SK-N-SH (cell line): ENCODE measurements at regions of chr9 and their contacts with region 1.

Region 1: GRCh38 chr9:98034593-98035546 is 21.7 kb upstream of the NANS start:
- DNase-seq: peak; percentile 79
- H3K4me3 ChIP-seq: no peak overlapping the region
- H3K27ac ChIP-seq: peak overlapping the region in 1 of 2 experiments; percentile 18; a peak in 1 of 4 replicates
- H3K4me1 ChIP-seq: peaks cover 0 to 3% of the 10 kb centered on the region in 2 experiments; a peak in 1 of 4 replicates
- H3K27me3 ChIP-seq: no peaks in the 10 kb centered on the region
- CTCF ChIP-seq: peak; percentile 83
- EP300 ChIP-seq: no peak
- RAD21 ChIP-seq: peak; percentile 64

Region 2: DNA sequence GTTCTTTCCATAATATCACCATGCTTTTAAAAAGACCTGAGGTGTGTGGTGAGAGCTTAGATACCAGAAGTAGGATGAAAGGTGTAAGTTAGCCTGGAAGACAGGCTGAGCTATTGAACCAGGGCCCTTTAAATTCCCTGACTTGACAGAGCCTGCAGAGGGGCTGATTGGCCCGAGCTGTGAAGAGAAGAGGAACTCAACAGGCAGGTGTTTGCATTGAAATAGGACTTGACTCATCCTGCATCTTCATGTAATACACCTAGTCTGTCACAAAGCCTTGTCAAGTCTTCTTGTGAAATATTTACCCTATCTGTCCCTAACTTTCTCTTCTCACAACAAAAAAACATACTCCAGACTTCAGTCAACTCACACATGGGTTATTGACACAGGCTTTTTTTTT is 68.4 kb before region 1 on chr9:
- CTCF ChIA-PET with region 1: no interaction called
- POLR2A ChIA-PET with region 1: no interaction called
- DNase-seq: no peak
- H3K4me3 ChIP-seq: no peak overlapping the region
- H3K27ac ChIP-seq: no peak overlapping the region
- H3K4me1 ChIP-seq: no peaks in the 10 kb centered on the region
- H3K27me3 ChIP-seq: peaks cover 20% of the 10 kb centered on the region; the same call in 1 of the 2 replicates
- CTCF ChIP-seq: no peak
- EP300 ChIP-seq: no peak
- RAD21 ChIP-seq: no peak

Region 3: GRCh38 chr9:97982683-97983588 is 51.9 kb before region 1 on chr9 and contains the start of gene ANP32B:
- CTCF ChIA-PET with region 1: interaction called, 18 read pairs
- POLR2A ChIA-PET with region 1: no interaction called
- DNase-seq: peak; percentile 92
- H3K4me3 ChIP-seq: peak within 1 kb of the TSS; percentile 91 to 98
- H3K27ac ChIP-seq: peak within 1 kb of the TSS; percentile 89 to 96
- H3K4me1 ChIP-seq: peaks cover 4 to 32% of the 10 kb centered on the region in 2 experiments; a peak in 2 of 4 replicates
- H3K27me3 ChIP-seq: no peaks in the 10 kb centered on the region
- CTCF ChIP-seq: peak; percentile 65
- EP300 ChIP-seq: no peak
- RAD21 ChIP-seq: peak; percentile 31
- polyA plus RNA-seq, gene ANP32B: 21.6 and 28.4 TPM in 2 replicates

Region 4: DNA sequence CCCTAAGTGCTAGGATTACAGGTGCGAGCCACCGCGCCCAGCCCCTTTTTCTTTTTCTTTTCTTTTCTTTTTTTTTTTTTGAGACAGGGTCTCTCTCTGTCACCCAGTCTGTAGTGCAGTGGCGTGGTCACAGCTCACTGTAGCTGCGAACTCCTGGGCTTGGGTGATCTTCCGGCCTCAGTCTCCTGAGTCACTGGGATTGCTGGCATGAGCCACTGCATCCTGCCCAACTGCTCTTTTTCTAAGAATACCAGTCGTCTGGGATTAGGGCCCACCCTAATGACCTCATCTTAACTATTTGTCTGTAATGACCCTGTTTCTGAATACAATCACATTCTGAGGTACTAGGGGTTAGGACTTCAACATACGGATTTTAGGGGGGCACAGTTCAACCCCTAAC is 12.4 kb before region 1 on chr9:
- CTCF ChIA-PET with region 1: interaction called, 44 read pairs
- POLR2A ChIA-PET with region 1: no interaction called
- DNase-seq: no peak
- H3K4me3 ChIP-seq: no peak overlapping the region
- H3K27ac ChIP-seq: 0 out of 4 replicates have a peak overlapping the region, but pooled peaks of 1 of the 2 experiments have one; percentile 20
- H3K4me1 ChIP-seq: peaks cover 0 to 16% of the 10 kb centered on the region in 2 experiments; a peak in 2 of 4 replicates
- H3K27me3 ChIP-seq: no peaks in the 10 kb centered on the region
- CTCF ChIP-seq: no peak
- EP300 ChIP-seq: no peak
- RAD21 ChIP-seq: no peak

Region 5: DNA sequence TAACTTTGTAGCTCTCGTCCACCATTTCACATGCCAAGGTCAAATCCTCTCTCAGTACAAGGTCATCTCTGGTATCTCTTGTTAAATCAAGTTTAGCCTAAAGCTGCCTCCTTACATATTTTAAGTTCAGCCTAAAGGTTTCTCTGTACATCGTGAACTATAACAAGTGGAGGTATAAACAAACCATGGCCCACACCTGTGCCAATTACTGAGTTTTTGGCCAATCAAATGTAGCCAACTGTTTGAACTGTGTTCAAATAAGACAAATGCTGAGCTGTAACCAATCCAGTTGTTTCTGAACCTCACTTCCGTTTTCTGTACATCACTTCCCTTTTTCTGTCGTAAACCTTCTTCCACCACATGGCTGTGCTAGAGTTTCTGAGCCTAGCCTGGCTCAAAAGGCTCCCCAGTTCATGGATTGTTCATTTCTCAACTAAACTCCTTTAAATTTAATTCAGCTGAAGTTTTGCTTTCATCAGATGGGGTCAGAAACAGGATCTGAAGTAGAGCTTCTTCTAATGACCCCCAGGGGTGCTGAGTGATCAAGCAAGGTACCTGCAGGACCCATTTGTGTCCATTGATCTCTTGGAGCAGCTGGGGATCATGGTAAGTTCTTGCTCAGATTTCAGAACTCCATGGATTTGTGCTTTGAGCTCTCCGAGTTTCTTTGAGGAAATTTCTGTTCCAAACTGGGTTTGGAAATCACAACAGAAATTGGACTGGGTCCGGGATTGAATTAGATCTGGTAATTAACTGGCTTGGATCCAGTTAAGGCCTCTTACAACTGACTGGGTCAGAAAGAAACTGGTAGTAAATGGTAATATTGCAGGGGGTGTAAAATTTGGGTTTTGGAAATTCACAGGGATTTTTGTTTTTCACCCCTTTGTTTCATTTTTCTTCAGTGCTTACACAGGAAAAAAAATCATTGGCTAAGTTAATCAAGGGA is 10.6 kb after region 1 on chr9:
- CTCF ChIA-PET with region 1: interaction called, 14 read pairs
- POLR2A ChIA-PET with region 1: no interaction called
- DNase-seq: no peak
- H3K4me3 ChIP-seq: no peak overlapping the region
- H3K27ac ChIP-seq: no peak overlapping the region
- H3K4me1 ChIP-seq: no peaks in the 10 kb centered on the region
- H3K27me3 ChIP-seq: no peaks in the 10 kb centered on the region
- CTCF ChIP-seq: no peak
- EP300 ChIP-seq: no peak
- RAD21 ChIP-seq: no peak

Region 6: DNA sequence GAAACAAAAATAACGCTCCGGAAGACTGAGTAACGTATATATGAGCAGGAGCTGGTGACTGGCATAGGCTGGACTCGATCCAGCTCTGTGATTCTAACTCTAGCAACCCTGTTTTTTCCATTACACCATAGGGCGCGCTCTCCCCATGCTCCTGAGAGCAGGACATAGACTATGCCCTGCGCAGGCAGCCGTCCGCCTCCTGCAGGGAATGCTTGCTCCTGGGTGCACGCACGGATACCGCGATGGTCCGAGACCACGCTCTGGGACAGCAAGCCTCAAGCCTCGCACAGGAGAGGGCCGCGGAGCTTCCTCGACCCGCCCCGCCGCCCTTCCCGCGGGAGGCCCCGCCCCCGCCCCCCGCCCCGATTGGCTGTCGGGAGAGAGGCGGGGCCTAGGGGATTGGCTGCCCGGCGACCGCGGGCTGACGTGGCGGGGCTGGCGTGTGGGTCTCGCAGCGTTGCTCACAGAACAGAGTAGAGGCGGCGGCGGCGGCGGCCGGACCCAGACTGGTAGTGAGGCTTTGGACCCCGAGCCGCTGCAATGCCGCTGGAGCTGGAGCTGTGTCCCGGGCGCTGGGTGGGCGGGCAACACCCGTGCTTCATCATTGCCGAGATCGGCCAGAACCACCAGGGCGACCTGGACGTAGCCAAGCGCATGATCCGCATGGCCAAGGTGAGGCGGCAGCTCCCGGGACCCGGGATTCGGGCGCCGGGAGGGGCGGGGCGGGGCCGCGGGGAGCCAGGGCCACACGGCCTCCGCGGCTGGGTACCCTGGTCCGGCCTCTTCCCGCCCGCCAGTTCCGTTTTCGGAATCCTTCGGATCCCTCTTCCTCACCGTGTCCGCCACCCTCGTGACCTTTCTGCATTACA is 21.6 kb after region 1 on chr9 and contains the start of gene NANS:
- CTCF ChIA-PET with region 1: interaction called, 10 read pairs
- POLR2A ChIA-PET with region 1: no interaction called
- DNase-seq: peak; percentile 98
- H3K4me3 ChIP-seq: peak within 1 kb of the TSS; percentile 67 to 96
- H3K27ac ChIP-seq: peak within 1 kb of the TSS; percentile 81 to 85
- H3K4me1 ChIP-seq: peaks cover 3 to 12% of the 10 kb centered on the region in 2 experiments; a peak in 2 of 4 replicates
- H3K27me3 ChIP-seq: no peaks in the 10 kb centered on the region
- CTCF ChIP-seq: peak; percentile 18; the same call in 1 of the 2 replicates
- EP300 ChIP-seq: peak in 1 of 2 experiments; percentile 41; a peak in 1 of 4 replicates
- RAD21 ChIP-seq: peak; percentile 33
- polyA plus RNA-seq, gene NANS: 53.5 and 61.3 TPM in 2 replicates